Breast epithelium (tissue), 4 donors: ENCODE measurements at regions of chr22 and their contacts with region 1.

Region 1: DNA sequence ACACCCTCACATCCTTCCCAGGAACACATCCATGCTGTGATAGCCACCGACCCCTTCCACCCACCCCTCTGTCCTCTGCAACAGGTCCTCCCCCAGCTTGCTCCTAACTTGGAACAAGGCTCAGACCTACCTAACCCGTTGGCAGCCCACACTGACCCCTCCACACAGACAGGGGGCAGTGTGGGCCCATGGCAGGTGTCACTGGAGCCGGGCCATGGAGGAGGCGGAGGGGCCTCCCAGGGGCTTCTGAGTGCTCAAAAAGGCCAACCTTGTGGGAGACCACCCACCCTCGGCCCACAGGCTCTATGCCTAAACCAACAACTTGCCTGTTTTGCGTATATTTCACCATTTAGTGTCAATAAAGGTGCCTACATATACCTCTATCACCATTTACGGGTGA is 57.0 kb downstream of the CERK start:
- DNase-seq: no peak
- H3K4me3 ChIP-seq: no peak overlapping the region
- H3K27ac ChIP-seq: no peak overlapping the region
- H3K4me1 ChIP-seq: no peaks in the 10 kb centered on the region
- H3K27me3 ChIP-seq: no peaks in the 10 kb centered on the region
- CTCF ChIP-seq: no peak
- POLR2A ChIP-seq: no peak

Region 2: DNA sequence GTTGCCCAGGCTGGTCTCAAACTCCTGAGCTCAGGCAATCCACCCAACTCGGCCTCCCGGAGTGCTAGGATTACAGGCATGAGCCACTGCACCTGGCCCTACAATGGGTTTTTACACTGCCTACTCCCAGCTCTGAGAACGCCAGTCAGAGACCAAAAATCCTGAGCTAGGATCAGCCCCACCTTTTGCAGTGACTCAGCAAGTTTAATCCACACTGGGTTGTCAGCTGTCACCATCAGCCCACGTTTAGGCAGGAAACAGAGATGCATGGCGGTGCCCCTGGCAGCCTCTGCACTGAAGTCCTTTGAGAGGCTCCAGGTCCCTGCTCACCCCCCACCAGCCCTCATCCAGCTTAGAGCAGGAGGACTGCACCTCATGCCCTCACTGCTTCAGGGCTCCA is 1811.0 kb before region 1 on chr22:
- intact Hi-C with region 1: loop called (anchors 10 kb)
- DNase-seq: no peak
- H3K4me3 ChIP-seq: no peak overlapping the region
- H3K27ac ChIP-seq: no peak overlapping the region
- H3K4me1 ChIP-seq: no peaks in the 10 kb centered on the region
- H3K27me3 ChIP-seq: no peaks in the 10 kb centered on the region
- CTCF ChIP-seq: no peak
- POLR2A ChIP-seq: no peak

Region 3: GRCh38 chr22:46635756-46636155 is 45.3 kb before region 1 on chr22:
- intact Hi-C with region 1: no loop called
- DNase-seq: no peak
- H3K4me3 ChIP-seq: no peak overlapping the region
- H3K27ac ChIP-seq: peak overlapping the region in 1 of 2 donors; percentile 32
- H3K4me1 ChIP-seq: no peaks in the 10 kb centered on the region
- H3K27me3 ChIP-seq: no peaks in the 10 kb centered on the region
- CTCF ChIP-seq: no peak
- POLR2A ChIP-seq: no peak

Region 4: GRCh38 chr22:46829941-46830715 is 149.1 kb after region 1 on chr22:
- intact Hi-C with region 1: no loop called
- DNase-seq: no peak
- H3K4me3 ChIP-seq: no peak overlapping the region
- H3K27ac ChIP-seq: no peak overlapping the region
- H3K4me1 ChIP-seq: peaks cover 0 to 6% of the 10 kb centered on the region in 2 donors
- H3K27me3 ChIP-seq: no peaks in the 10 kb centered on the region
- CTCF ChIP-seq: no peak
- POLR2A ChIP-seq: no peak